Mammary epithelial cell (primary cell): ENCODE measurements at regions of chr15 and their contacts with region 1.

Region 1: DNA sequence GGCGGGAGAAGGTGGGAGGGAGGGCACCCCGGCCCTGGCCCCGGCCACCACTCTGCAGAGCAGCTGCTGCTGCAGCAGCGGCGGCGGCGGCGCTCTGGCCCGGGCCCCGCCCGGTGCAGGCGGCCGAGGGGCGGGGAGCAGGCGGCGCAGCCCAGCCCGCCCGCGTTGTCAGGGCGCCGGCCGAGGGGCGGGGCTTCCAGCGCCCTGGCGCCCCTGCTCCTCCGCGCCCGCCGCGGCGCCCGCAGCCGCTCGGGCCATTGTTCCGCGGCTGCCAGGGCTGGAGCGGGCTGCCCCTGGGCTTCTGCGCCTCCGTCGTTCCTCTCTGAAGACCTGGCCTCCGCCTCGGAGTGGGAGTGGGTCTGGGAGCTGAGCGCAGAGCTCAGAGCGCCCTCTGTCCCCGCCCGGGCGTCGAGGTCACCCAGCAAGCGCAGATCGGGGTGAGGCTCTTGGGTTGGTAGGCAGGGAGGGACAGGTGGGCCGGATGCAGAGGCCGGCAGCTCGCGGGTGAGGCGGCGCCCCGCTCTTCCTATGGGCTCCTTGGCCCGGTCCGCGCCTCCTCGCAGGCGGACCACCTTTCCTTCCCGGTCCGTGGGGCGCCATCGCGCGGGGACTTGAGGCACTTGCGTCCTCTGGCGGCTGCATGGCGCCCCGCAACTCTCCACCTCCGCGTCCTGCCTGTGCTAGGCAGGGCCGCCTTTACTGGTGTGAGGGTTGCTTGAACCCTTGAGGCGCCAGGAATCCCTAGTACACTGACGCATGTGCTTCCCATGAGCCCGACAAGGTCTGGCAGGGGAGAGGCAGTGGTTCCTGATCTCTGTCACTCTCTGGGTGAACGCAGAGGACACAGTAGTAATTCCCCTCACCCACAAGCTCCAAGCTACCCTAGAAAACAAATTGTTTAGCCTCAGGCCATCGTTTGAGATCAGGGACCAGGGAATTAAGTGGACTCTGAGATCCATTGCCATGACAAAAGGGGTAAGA is at the start of gene LPCAT4:
- DNase-seq: peak; percentile 87
- H3K4me3 ChIP-seq: peak within 1 kb of the TSS; percentile 68 to 89 (median 77)
- H3K27ac ChIP-seq: peak within 1 kb of the TSS; percentile 46
- H3K4me1 ChIP-seq: peaks cover 25% of the 10 kb centered on the region
- H3K27me3 ChIP-seq: no peaks in the 10 kb centered on the region
- CTCF ChIP-seq: peak; percentile 70 to 96
- total RNA-seq, gene LPCAT4: 9.5 to 74.6 TPM

Region 2: DNA sequence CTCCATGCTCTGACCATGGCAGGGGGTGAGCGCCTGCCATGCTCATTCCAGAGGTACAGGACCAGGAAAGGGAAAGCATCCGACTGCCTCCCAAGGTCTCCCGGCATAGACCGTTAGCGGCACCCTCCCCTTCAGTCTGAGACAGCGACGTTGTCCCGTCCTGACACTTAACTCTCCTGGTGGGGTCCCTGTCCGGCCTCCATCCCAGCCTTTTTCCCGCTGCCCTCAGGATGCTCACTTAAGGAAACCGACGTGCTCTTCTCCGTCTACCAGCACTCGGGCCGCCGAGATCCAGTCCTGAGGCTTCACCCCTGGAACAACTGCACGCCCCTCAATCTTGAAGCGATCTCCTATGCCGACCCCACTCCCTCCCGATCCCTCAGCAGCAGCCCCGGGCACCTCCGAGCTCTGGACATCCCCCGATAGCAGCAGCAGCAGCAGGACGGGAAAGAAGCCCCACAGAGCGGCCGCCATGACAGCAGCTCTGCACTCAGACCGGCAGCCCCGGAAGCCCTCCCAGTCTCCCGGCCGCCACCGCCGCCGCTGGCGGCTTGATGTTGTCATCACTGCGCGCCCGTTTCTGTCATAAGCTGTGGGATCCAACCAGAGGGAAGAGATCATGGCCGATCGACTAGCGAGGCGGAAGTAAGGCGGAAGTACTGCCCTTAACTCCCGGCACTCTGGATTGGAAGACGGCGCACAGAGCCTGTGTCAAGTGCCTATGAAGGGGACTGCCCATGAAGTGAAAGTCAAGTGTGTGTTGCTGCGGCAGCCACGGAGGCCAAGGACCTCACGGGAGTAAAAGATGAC is 265.8 kb before region 1 on chr15 and contains the starts of genes EMC7 and PGBD4:
- CTCF ChIA-PET with region 1: no interaction called
- dilution Hi-C with region 1: no loop called
- in situ Hi-C with region 1: loop called in 1 of 2 experiments (anchors 25 kb)
- intact Hi-C with region 1: no loop called
- DNase-seq: peak; percentile 99
- H3K4me3 ChIP-seq: peak within 1 kb of the TSS; percentile 96 to 99 (median 96)
- H3K27ac ChIP-seq: peak within 1 kb of the TSS; percentile 74
- H3K4me1 ChIP-seq: peaks cover 14% of the 10 kb centered on the region
- H3K27me3 ChIP-seq: no peaks in the 10 kb centered on the region
- CTCF ChIP-seq: no peak
- total RNA-seq, gene EMC7: 28.3 to 75.8 TPM
- total RNA-seq, gene PGBD4: 1.3 to 2.1 TPM

Region 3: DNA sequence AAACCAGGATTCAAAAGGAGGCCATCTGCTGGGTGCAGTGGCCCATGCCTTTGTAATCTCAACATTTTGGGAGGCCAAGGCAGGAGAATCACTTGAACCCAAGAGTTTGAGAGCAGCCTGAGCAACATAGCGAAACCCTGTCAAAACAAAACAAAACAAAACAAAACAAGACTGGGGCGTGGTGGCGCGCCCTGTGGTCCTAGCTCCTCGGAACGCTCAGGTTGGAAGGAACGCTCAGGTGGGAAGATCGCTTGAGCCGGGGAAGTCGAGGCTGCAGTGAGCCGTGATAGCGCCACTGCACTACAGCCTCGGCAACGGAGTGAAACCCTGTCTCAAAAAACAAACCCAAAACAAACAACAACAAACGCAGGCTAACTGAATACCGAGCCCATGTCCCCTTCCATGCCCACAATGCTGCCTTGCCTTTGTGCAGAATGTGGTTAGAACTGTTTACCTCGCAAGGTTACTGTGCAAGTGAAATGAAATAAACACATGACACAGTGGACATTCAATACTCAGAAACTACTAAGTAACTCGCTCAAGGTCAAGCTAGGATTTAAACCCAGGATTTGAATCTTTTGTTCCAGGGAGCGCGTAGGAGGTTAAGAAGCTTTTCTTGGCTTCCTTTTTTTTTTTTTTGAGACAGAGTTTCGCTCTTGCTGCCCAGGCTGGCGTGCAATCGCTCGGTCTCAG is 143.3 kb before region 1 on chr15:
- CTCF ChIA-PET with region 1: no interaction called
- dilution Hi-C with region 1: no loop called
- in situ Hi-C with region 1: no loop called
- intact Hi-C with region 1: loop called (anchors 1 kb)
- DNase-seq: no peak
- H3K4me3 ChIP-seq: peak overlapping the region; percentile 61 to 82 (median 74)
- H3K27ac ChIP-seq: peak overlapping the region; percentile 75
- H3K4me1 ChIP-seq: peaks cover 6% of the 10 kb centered on the region
- H3K27me3 ChIP-seq: no peaks in the 10 kb centered on the region
- CTCF ChIP-seq: no peak

Region 4: GRCh38 chr15:34437687-34438086 is 70.3 kb after region 1 on chr15 and contains the start of gene GOLGA8A:
- CTCF ChIA-PET with region 1: no interaction called
- dilution Hi-C with region 1: no loop called
- in situ Hi-C with region 1: no loop called
- intact Hi-C with region 1: loop called (anchors 2 kb)
- DNase-seq: peak; percentile 55
- H3K4me3 ChIP-seq: peak within 1 kb of the TSS; percentile 60 to 83 (median 70)
- H3K27ac ChIP-seq: no peak within 1 kb of the TSS
- H3K4me1 ChIP-seq: peaks cover 6% of the 10 kb centered on the region
- H3K27me3 ChIP-seq: peaks cover 2% of the 10 kb centered on the region
- CTCF ChIP-seq: no peak
- total RNA-seq, gene GOLGA8A: 24.0 to 159 TPM